Panc1 (cell line): ENCODE measurements at regions of chr12 and their contacts with region 1.

Region 1: DNA sequence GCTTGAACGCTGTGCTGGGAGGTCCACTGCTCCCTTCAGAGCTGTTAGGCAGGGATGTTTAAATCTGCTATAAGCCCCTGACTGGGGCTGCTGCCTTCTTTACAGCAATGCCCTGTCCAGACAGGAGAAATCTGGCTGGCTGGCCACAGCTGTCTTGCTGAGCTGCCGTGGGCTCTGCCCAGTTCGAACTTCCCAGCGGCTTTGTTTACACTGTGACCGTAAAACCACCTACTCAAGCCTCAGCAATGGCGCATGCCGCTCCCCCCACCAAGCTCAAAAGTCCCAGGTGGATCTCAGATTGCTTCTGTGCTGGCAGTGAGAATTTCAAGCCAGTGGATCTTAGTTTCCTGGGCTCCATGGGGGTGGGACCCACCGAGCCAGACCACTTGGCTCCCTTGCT is 35.8 kb downstream of the CKAP4 start:
- DNase-seq: no peak
- ATAC-seq: no peak
- H3K4me3 ChIP-seq: no peak overlapping the region
- H3K27ac ChIP-seq: no peak overlapping the region
- H3K4me1 ChIP-seq: no peaks in the 10 kb centered on the region
- H3K27me3 ChIP-seq: peaks cover 2% of the 10 kb centered on the region; the same call in 1 of the 2 replicates
- CTCF ChIP-seq: no peak

Region 2: GRCh38 chr12:106010741-106011140 is 201.2 kb before region 1 on chr12:
- CTCF ChIA-PET with region 1: no interaction called
- POLR2A ChIA-PET with region 1: no interaction called
- in situ Hi-C with region 1: no loop called
- intact Hi-C with region 1: no loop called
- DNase-seq: no peak
- ATAC-seq: no peak
- H3K4me3 ChIP-seq: no peak overlapping the region
- H3K27ac ChIP-seq: no peak overlapping the region
- H3K4me1 ChIP-seq: no peaks in the 10 kb centered on the region; the same call in 1 of the 2 replicates
- H3K27me3 ChIP-seq: no peaks in the 10 kb centered on the region
- CTCF ChIP-seq: no peak

Region 3: GRCh38 chr12:106126441-106127337 is 85.3 kb before region 1 on chr12:
- CTCF ChIA-PET with region 1: no interaction called
- POLR2A ChIA-PET with region 1: interaction called, 16 read pairs
- in situ Hi-C with region 1: no loop called
- intact Hi-C with region 1: no loop called
- DNase-seq: peak; percentile 90
- ATAC-seq: peak; percentile 82
- H3K4me3 ChIP-seq: no peak overlapping the region
- H3K27ac ChIP-seq: peak overlapping the region; percentile 96
- H3K4me1 ChIP-seq: peaks cover 94% of the 10 kb centered on the region
- H3K27me3 ChIP-seq: no peaks in the 10 kb centered on the region
- CTCF ChIP-seq: no peak